ENCODE measurements at regions of chr13 and their contacts with region 1.

Region 1: GRCh38 chr13:50991579-50992521 is 82.3 kb downstream of the RNASEH2B start:
- DNase-seq: peak; percentile 69 to 94 (median 92)
- H3K4me3 ChIP-seq: peak overlapping the region in 3 of 7 experiments; percentile 20 to 58 (median 50)
- H3K27ac ChIP-seq: peak overlapping the region; percentile 64 to 88
- H3K4me1 ChIP-seq: peaks cover 6 to 50% (median 43%) of the 10 kb centered on the region in 4 experiments
- H3K27me3 ChIP-seq: no peaks in the 10 kb centered on the region

Region 2: GRCh38 chr13:50977174-50977830 is 14.5 kb before region 1 on chr13:
- CTCF ChIA-PET with region 1: interaction called, 12 read pairs
- POLR2A ChIA-PET with region 1: interaction called, 3 read pairs
- DNase-seq: no peak
- H3K4me3 ChIP-seq: no peak overlapping the region
- H3K27ac ChIP-seq: no peak overlapping the region
- H3K4me1 ChIP-seq: peaks cover 7 to 19% (median 10%) of the 10 kb centered on the region in 4 experiments
- H3K27me3 ChIP-seq: no peaks in the 10 kb centered on the region

Region 3: GRCh38 chr13:51044023-51044665 is 52.3 kb after region 1 on chr13:
- CTCF ChIA-PET with region 1: interaction called, 10 read pairs
- POLR2A ChIA-PET with region 1: no interaction called
- DNase-seq: no peak
- H3K4me3 ChIP-seq: no peak overlapping the region
- H3K27ac ChIP-seq: no peak overlapping the region
- H3K4me1 ChIP-seq: peaks cover 0 to 11% (median 8%) of the 10 kb centered on the region in 4 experiments
- H3K27me3 ChIP-seq: no peaks in the 10 kb centered on the region

Region 4: DNA sequence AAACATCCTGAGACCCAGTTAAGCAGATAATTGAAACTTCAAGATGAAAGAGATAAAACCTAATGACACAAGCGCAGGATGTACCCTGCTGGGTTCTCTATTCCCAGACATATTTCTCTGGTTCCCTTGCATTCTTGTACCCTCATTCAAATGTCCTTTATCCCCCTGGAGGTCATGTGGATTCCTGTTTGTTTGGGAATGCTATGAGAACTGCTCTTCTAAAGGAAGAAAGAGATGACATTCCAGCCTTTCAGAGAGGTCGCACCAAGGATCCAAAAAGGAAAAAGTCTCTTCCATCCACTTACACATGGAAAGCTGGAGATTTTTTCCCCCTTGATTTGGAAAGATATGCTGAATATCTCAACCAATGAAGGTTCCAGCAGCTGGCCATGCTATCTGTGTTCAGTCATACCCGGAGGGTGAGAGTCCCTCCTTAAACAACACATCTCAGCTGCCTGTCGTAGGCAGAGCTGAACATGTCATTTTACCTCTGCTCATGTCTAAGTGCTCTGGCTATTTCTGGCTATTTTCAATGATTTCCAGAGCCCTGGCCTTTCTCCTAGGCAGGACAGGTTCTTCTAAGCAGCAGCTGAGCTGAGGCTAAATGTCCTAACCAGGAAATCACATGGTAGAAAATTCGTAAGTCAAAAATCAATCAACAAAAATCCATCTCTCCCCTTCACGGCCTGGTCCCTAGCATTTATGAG is 66.8 kb after region 1 on chr13:
- CTCF ChIA-PET with region 1: interaction called, 10 read pairs
- POLR2A ChIA-PET with region 1: interaction called, 3 read pairs
- DNase-seq: no peak
- H3K4me3 ChIP-seq: no peak overlapping the region
- H3K27ac ChIP-seq: no peak overlapping the region
- H3K4me1 ChIP-seq: peaks cover 15 to 61% (median 39%) of the 10 kb centered on the region in 4 experiments
- H3K27me3 ChIP-seq: no peaks in the 10 kb centered on the region